Aorta (tissue), 5 donors: ENCODE measurements at regions of chr19 and their contacts with region 1.

Region 1: GRCh38 chr19:21835810-21836444 is at the start of gene ZNF43:
- DNase-seq: peak; percentile 98 to 99
- ATAC-seq: peak; percentile 99
- H3K4me3 ChIP-seq: peak within 1 kb of the TSS; percentile 46 to 78
- H3K27ac ChIP-seq: peak within 1 kb of the TSS; percentile 23 to 87
- H3K4me1 ChIP-seq: no peaks in the 10 kb centered on the region
- H3K27me3 ChIP-seq: no peaks in the 10 kb centered on the region
- total RNA-seq, gene ZNF43: 15.1 to 26.3 TPM

Region 2: GRCh38 chr19:20503476-20503875 is 1332.5 kb before region 1 on chr19:
- intact Hi-C with region 1: no loop called
- DNase-seq: no peak
- ATAC-seq: no peak
- H3K4me3 ChIP-seq: no peak overlapping the region
- H3K27ac ChIP-seq: no peak overlapping the region
- H3K4me1 ChIP-seq: no peaks in the 10 kb centered on the region
- H3K27me3 ChIP-seq: no peaks in the 10 kb centered on the region

Region 3: DNA sequence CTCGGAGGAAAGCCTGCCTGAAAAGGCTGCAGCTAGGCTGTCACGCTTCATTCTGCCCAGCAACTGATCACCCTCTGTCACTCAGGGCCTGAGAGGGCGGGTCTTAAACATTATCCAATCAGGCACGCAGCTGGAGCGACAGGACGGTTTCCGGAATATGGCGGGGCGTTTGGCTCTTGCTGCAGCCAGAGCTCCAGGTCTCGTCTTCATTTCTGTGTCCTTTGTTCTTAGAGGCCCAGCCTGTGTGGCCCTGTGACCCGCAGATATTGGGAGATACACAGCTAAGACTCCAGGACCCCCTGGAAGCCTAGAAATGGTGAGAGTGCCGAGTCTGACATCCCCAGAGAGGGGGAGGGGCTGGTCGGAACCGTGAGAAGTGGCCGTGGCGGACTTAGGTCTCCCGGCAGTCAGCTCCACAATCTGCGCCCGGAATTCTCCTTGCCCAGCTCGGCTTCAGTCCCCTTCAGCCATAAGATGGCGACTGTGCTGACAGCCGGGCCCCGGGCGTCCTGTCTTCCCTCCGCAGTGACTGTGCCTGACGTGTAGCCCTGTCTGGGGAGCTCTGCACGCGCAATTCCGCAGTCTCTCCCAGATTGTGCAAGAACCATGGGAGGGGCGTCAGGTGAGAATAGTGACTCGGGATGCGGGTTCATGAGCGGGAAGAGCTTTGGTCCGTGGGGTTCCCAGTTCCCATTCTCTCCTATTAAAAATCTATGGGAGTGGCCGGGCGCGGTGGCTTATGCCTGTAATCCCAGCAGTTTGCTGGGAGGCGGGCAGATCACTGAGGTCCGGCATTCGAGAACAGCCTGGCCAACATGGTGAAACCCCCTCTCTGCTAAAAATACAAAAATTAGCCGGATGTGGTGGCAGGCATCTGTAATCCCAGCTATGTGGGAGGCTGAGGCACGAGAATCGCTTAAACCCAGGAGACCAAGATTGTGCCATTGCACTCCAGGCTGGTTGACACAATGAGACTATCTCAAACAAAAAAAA is 330.2 kb before region 1 on chr19 and contains the start of gene ZNF429:
- intact Hi-C with region 1: loop called in 1 of 2 experiments (anchors 5 kb)
- DNase-seq: peak; percentile 95
- ATAC-seq: peak; percentile 98
- H3K4me3 ChIP-seq: peak within 1 kb of the TSS; percentile 47 to 93
- H3K27ac ChIP-seq: peak within 1 kb of the TSS; percentile 6 to 98
- H3K4me1 ChIP-seq: peaks cover 0 to 2% of the 10 kb centered on the region in 2 donors
- H3K27me3 ChIP-seq: no peaks in the 10 kb centered on the region
- total RNA-seq, gene ZNF429: 5.8 to 14.3 TPM

Region 4: GRCh38 chr19:21608571-21608970 is 227.4 kb before region 1 on chr19:
- intact Hi-C with region 1: no loop called
- DNase-seq: no peak
- ATAC-seq: no peak
- H3K4me3 ChIP-seq: no peak overlapping the region
- H3K27ac ChIP-seq: no peak overlapping the region
- H3K4me1 ChIP-seq: no peaks in the 10 kb centered on the region
- H3K27me3 ChIP-seq: no peaks in the 10 kb centered on the region

Region 5: GRCh38 chr19:21767065-21767800 is 68.7 kb before region 1 on chr19 and contains the start of gene ZNF100:
- intact Hi-C with region 1: loop called in 1 of 2 experiments (anchors 5 kb)
- DNase-seq: peak; percentile 96
- ATAC-seq: peak; percentile 95
- H3K4me3 ChIP-seq: peak within 1 kb of the TSS; percentile 40 to 74
- H3K27ac ChIP-seq: peak within 1 kb of the TSS in 1 of 2 donors; percentile 80
- H3K4me1 ChIP-seq: no peaks in the 10 kb centered on the region
- H3K27me3 ChIP-seq: no peaks in the 10 kb centered on the region
- total RNA-seq, gene ZNF100: 17.0 to 21.6 TPM

Region 6: GRCh38 chr19:22052644-22053013 is 216.7 kb after region 1 on chr19:
- intact Hi-C with region 1: loop called in 1 of 2 experiments (anchors 5 kb)
- DNase-seq: peak in 1 of 2 donors; percentile 49
- ATAC-seq: peak; percentile 45
- H3K4me3 ChIP-seq: peak overlapping the region in 1 of 2 donors; percentile 59
- H3K27ac ChIP-seq: no peak overlapping the region
- H3K4me1 ChIP-seq: no peaks in the 10 kb centered on the region
- H3K27me3 ChIP-seq: no peaks in the 10 kb centered on the region